A673 (cell line): ENCODE measurements at regions of chr7 and their contacts with region 1.

Region 1: DNA sequence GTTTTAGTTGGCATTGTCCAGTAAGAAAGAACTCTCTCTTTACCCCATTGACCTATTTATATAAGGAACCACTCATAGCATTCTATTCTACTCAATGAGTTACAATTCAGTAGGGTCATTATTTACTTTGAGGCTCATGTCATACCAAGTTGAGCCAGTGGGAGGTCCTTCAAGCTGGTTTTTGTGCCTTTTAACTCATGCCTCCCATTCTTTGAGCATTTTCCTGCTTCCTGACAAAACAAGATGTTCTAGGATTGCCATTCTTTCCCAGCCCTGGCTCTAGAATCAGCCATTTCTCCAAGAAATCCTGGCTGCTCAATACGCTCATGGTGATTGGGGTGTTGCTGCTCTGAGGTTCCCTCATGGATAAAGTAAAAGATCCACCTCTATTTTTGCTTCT is 250.1 kb downstream of the ABCA13 start:
- DNase-seq: no peak
- H3K4me3 ChIP-seq: no peak overlapping the region
- H3K27ac ChIP-seq: no peak overlapping the region
- H3K4me1 ChIP-seq: no peaks in the 10 kb centered on the region
- H3K27me3 ChIP-seq: no peaks in the 10 kb centered on the region
- CTCF ChIP-seq: no peak

Region 2: DNA sequence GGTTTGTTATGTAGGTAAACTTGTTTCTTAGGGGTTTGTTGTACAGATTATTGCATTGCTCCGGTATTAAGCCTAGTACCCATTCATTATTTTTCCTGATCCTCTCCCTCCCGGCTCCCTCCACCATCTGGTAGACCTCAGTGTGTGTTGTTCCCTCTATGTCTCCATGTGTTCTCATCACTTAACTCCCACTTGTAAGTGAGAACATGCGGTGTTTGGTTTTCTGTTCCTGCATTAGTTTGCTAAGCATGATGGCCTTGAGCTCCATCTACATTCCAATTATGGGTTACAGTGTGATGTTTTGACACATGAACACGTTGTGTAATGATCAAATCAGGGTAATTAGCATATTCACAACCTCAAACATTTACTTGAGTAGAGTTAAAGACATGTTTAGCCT is 12.6 kb before region 1 on chr7:
- CTCF ChIA-PET with region 1: no interaction called
- POLR2A ChIA-PET with region 1: no interaction called
- intact Hi-C with region 1: no loop called
- DNase-seq: no peak
- H3K4me3 ChIP-seq: no peak overlapping the region
- H3K27ac ChIP-seq: no peak overlapping the region
- H3K4me1 ChIP-seq: no peaks in the 10 kb centered on the region
- H3K27me3 ChIP-seq: no peaks in the 10 kb centered on the region
- CTCF ChIP-seq: no peak

Region 3: GRCh38 chr7:48441848-48442492 is 20.6 kb after region 1 on chr7:
- CTCF ChIA-PET with region 1: no interaction called
- POLR2A ChIA-PET with region 1: interaction called, 24 read pairs
- intact Hi-C with region 1: no loop called
- DNase-seq: no peak
- H3K4me3 ChIP-seq: no peak overlapping the region
- H3K27ac ChIP-seq: no peak overlapping the region
- H3K4me1 ChIP-seq: no peaks in the 10 kb centered on the region
- H3K27me3 ChIP-seq: no peaks in the 10 kb centered on the region
- CTCF ChIP-seq: no peak